Caco-2 (cell line): ENCODE measurements at regions of chr15 and their contacts with region 1.

Region 1: GRCh38 chr15:77292969-77293558 is 126.8 kb downstream of the PEAK1 start:
- DNase-seq: no peak
- H3K4me3 ChIP-seq: no peak overlapping the region
- H3K4me3 Mint-ChIP-seq: no peak overlapping the region
- H3K27ac Mint-ChIP-seq: no peak overlapping the region
- H3K4me1 ChIP-seq: peaks cover 17% of the 10 kb centered on the region
- H3K4me1 Mint-ChIP-seq: peaks cover 8% of the 10 kb centered on the region
- H3K27me3 ChIP-seq: no peaks in the 10 kb centered on the region
- H3K27me3 Mint-ChIP-seq: no peaks in the 10 kb centered on the region
- CTCF ChIP-seq: no peak

Region 2: GRCh38 chr15:77160562-77161478 is 132.2 kb before region 1 on chr15:
- CTCF ChIA-PET with region 1: no interaction called
- POLR2A ChIA-PET with region 1: no interaction called
- intact Hi-C with region 1: no loop called
- DNase-seq: peak in 1 of 2 experiments; percentile 28
- H3K4me3 ChIP-seq: no peak overlapping the region
- H3K4me3 Mint-ChIP-seq: no peak overlapping the region
- H3K27ac Mint-ChIP-seq: no peak overlapping the region
- H3K4me1 ChIP-seq: peaks cover 28% of the 10 kb centered on the region
- H3K4me1 Mint-ChIP-seq: peaks cover 13% of the 10 kb centered on the region
- H3K27me3 ChIP-seq: no peaks in the 10 kb centered on the region
- H3K27me3 Mint-ChIP-seq: no peaks in the 10 kb centered on the region
- CTCF ChIP-seq: no peak

Region 3: DNA sequence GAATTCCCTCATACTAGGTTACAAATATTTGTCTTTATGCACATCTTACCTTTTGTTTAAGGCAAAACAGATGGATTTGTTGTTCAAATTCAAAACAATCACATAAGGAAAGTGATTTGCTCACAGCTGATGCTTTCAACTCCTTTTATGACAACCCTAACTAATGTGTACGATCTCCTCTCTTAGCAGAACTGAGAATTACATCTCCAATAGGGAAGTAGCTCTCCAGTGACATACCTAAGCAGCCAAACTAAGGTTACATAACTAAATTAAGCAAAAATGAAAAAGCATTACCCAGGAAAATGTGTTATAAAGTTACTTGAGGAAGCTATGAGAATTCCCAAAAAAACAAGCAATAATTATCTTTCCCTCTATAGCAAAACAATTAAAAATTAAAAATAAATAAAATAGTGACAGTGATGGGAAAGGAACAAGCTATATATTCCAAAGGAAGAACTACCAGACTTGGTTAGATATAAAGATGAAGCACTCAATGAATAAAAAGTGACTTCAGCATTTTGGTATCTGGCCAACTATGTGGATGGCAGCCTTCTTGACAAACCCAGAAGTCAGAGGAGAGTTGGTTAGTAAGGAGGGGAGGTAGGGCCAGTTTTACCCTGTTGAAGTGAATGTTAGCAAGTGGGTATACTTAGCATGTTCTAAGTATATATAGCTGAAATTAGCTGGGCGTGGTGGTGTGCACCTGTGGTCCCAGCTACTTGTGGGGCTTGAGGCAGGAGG is 94.5 kb after region 1 on chr15:
- CTCF ChIA-PET with region 1: no interaction called
- POLR2A ChIA-PET with region 1: interaction called, 13 read pairs
- intact Hi-C with region 1: no loop called
- DNase-seq: no peak
- H3K4me3 ChIP-seq: no peak overlapping the region
- H3K4me3 Mint-ChIP-seq: no peak overlapping the region
- H3K27ac Mint-ChIP-seq: no peak overlapping the region
- H3K4me1 ChIP-seq: no peaks in the 10 kb centered on the region
- H3K4me1 Mint-ChIP-seq: no peaks in the 10 kb centered on the region
- H3K27me3 ChIP-seq: no peaks in the 10 kb centered on the region
- H3K27me3 Mint-ChIP-seq: no peaks in the 10 kb centered on the region
- CTCF ChIP-seq: no peak

Region 4: DNA sequence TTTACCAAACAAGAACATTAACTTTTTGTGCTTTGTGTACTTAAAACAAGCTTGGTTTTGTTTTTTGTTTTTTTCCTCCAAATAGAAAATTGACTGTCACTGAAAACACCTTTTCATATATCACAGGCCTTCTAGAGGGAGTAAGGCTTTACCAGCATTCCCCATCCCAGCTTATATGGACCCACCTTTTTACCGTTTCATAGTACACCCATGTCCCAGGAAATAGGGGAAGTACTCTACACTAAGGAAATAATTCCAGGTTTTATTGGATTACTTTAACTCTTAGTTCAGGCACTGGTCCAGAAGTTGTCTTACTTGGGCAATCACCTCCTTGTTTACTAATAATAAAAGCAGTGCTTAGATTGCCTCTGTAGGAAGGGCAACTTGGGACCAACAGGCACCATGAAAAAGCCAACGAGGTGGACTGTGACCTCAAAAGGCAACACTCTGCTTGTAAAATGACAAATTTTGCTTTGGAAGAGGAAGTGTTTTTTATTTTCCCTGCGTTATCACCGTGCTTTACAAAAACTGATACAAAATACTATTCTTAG is 153.9 kb after region 1 on chr15:
- CTCF ChIA-PET with region 1: no interaction called
- POLR2A ChIA-PET with region 1: no interaction called
- intact Hi-C with region 1: no loop called
- DNase-seq: peak in 1 of 2 experiments; percentile 34
- H3K4me3 ChIP-seq: no peak overlapping the region
- H3K4me3 Mint-ChIP-seq: no peak overlapping the region
- H3K27ac Mint-ChIP-seq: no peak overlapping the region
- H3K4me1 ChIP-seq: no peaks in the 10 kb centered on the region
- H3K4me1 Mint-ChIP-seq: no peaks in the 10 kb centered on the region
- H3K27me3 ChIP-seq: no peaks in the 10 kb centered on the region
- H3K27me3 Mint-ChIP-seq: no peaks in the 10 kb centered on the region
- CTCF ChIP-seq: no peak